Cardiac septum (tissue), 1 donor: ENCODE measurements at regions of chr2 and their contacts with region 1.

Region 1: DNA sequence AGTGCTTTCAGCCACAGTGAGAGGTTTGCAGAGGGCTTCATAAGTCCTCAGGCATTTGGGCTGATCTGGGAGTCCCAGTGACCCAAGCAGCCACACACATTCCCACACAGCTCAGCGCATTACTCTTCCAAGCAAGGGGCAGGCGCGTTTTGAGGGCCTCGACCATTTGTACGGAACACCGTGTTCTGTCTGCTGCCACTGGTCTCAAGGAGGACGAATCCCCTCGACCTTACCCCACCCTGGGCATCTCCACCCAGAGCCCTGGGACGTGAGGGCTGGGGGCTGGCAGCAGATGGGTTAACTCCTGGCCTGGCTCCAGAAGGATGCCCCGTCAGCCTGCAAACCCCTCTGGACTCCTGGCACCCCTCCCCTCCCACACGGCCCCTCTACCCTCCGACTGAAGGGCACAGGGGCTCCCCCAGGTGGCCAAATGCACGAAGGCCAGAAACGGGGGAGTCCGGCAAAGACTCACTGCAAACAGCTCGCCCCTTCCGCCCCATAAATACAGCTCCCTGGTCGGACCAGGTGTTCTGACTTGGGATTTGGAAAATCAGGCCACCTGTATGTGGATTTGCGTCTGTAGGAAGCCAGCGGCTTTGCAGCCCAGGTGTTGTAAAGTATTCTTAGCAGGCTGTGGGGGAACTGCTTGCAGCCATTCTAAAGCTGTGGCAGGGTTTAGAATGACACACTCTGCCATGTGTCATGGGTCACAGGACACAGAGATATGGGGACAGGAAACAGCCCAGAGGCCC is 33.6 kb upstream of the PTMA start:
- DNase-seq: peak; percentile 84

Region 2: DNA sequence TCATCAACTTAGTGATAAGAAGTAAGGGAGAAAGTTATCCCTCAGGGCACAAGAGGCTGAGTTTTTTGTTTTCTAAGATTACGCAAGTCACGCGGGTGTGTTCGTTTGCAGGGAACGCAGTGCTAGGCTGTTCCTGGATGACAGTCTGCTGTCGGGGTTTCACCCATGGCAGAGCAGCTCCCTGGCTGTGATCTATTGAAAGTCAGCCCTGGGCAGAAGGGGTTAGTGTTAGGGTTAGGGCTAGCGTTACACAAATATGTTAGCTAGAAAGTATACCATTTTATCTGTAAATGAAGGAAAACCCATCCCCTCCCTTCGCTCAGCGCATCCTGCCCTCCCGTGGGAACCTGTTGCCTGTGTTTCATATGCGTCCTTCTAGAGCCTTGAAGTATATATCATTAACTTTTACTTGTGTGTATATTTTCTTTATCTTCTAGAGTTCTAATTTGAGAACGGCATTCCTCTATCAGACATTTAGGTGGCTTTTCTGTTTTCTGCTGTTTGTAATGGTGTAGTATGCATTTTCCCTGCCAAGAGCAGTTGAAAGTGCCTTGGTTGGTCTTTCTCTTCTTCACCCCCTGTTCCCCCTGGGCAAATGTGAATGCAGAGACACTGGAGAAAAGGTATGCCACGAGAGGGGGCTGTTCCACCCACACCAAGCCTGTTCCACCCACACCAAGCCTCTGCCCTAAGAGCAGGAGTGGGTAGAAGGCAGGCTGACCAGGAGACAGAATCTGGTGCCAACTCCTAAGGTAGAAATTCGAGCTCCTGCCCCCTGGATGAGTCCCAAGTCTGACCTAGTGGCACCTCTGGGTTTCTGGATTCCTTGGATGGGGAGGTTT is 429.3 kb before region 1 on chr2:
- intact Hi-C with region 1: no loop called
- DNase-seq: peak; percentile 72

Region 3: DNA sequence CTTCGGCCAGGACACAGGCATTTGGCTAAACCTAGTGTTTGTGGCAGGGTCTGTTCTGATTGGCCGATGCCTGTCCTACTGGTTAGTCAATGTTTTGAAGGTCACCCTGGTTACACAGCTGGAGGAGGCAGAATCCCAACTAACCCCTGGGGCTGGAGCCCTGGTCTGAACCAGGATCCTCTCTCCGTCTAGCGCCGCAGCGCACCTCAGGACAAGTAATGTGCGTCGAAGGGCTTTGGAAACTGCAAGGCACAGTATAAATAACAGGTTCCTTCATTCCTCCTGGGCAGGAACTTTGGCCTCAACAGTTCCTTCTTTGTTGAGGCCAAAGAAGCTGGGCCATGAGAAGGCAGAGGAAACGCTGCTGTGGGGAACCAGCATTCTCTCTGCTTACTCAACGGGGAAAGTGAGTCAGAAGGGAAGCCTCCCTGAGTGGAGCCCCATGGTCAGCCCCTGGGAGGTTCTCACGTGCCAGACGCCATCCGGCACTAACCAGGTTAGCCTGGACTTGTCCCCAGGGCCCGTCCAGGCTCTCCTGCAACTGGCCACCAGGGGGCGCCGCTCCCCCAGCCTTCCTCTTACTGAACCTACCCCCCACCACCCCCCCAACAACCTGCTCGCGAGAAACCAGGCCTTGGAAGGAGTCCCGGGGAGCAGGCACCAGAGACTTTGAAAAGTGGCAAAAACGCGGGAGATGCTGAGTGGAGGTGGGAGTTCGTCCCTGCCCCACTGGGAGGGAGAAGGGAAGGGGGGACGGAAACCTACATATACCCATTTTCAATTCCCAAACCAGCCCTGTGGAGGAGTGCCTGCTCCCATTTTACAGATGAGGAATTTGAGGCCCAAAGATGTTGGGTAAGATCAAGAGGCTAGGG is 62.3 kb before region 1 on chr2:
- intact Hi-C with region 1: loop called (anchors 1 kb)
- DNase-seq: peak; percentile 94

Region 4: DNA sequence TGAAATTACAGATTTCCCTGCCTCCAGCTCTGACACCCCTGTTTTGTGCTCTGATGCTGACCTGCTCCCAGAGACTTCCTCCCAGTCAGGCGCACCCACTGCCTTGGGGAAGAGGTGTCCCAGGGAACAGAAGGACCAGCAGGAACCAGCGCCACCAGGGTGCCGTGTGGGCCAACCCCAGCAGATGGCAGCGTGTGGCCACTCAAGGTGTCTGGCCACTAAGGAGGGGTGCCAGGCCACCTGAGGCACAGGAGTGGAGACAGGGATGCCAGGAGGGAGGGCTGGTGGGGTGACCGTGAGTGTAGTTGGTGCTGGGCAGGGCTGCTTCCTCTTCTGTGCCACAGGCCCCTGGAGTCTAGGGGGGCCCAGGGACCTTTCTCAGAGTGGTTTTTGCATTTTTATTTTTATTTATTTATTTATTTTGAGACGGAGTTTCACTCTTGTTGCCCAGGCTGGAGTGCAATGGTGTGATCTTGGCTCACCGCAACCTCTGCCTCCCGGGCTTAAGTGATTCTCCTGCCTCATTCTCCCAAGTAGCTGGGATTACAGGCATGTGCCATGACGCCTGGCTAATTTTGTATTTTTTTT is 26.1 kb before region 1 on chr2:
- intact Hi-C with region 1: loop called (anchors 2 kb)
- DNase-seq: peak; percentile 90